ENCODE measurements at regions of chr9 and their contacts with region 1.

Region 1: DNA sequence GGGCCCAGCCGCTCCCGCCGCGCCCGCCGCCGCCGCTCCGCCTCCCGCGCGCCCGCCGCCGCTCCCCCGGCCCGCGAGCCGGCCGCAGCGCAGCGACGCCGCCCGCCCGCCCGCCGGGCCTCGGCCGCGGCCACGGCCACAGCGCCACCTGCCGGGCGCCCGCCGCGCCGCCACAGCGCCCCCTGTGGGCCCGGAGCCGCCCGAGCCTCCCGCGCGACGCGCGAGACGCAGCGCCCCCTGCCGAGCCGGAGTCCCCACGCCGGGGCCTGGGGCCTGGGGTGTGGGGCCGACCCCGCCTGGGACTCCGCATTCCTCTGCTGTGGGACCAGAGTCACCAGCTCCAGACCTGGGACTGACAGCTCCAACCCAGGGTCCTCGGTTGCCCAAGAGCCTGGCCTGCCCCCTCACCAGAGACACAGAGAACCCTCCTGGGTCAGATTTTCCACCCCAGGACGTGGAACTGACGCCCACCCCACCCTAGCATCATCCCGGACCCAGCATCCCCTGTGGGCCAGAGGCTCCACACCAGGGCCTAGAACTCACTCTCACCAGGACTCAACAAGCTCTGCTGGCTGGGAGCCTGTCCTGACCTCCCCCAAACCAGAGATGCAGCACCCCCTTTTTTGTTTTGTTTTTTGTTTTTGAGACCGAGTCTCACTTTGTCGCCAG is at the start of gene RAPGEF1:
- DNase-seq: peak in 1 of 2 experiments; percentile 40
- ATAC-seq: peak; percentile 62 to 67
- H3K4me3 ChIP-seq: peak within 1 kb of the TSS; percentile 67
- H3K27ac ChIP-seq: peak within 1 kb of the TSS; percentile 80 to 99
- H3K4me1 ChIP-seq: peaks cover 31% of the 10 kb centered on the region
- CTCF ChIP-seq: peak; percentile 100
- EP300 ChIP-seq: no peak
- POLR2A ChIP-seq: no peak
- RAD21 ChIP-seq: peak; percentile 67 to 87
- polyA plus RNA-seq, gene RAPGEF1: 27.7 and 32.5 TPM in 2 replicates

Region 2: DNA sequence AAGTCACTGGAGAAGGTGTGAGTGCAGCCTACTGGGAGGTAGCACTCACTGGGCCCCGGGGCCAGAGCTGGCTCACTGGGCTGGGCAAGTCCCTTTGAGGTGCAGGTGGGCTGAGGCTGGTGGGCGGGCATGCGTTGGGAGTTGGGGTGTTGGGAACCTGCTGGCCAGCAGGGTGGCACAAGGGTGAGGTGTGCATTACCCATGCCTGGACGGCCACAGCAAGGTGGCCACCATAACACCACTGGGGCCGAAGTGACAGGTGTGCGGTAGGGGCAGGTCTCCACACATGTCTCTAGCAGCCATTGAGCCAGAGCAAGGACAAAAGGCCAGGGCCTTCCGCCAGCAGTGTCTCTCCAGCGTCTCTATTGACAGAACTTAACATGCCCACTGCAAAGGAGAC is 172.2 kb before region 1 on chr9:
- CTCF ChIA-PET with region 1: interaction called, 12 read pairs
- POLR2A ChIA-PET with region 1: no interaction called
- DNase-seq: no peak
- ATAC-seq: peak in 1 of 2 experiments; percentile 38; a peak in 2 of 6 replicates
- H3K4me3 ChIP-seq: no peak overlapping the region
- H3K27ac ChIP-seq: no peak overlapping the region
- H3K4me1 ChIP-seq: no peaks in the 10 kb centered on the region
- CTCF ChIP-seq: no peak
- EP300 ChIP-seq: no peak
- POLR2A ChIP-seq: no peak
- RAD21 ChIP-seq: no peak

Region 3: DNA sequence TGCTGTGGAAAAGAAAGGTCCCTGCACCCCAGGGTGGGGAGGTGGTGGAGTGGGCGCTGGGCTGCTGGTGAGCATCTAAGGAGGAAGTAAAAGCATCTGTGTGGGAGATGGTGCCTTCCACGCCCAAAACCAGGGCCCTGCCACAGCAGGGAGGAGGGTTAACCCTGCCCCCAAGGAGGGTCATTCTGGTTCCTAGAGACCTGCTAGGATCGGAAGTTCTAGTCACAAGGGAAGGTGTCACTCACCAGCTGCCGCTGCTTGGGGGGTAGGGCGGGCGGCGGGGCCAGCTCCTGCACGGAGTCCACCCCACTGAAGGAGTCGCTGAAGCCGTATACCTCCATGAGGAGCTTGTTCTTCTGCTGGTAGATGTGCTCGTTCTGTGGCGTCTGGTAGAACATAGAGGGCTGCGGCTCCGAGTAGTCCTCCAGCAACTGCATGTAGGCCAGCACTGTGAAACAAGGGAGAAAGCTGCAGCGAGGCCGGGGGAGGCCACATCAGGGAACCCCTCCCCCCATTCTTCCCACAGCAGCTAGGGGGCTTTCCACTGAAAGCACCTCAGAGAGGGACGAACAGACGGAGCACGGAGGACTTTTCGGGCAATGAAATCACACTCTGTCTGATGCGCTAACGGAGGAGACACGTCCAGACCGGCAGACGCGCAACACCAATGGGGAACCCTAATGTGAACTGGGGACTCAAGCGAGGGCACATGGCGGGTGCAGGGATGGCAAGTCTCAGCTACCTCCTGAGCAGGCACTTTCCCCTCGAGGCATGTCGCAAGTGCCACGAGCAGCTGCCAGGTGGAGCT is 118.4 kb before region 1 on chr9:
- CTCF ChIA-PET with region 1: interaction called, 22 read pairs
- POLR2A ChIA-PET with region 1: no interaction called
- DNase-seq: no peak
- ATAC-seq: no peak
- H3K4me3 ChIP-seq: no peak overlapping the region
- H3K27ac ChIP-seq: no peak overlapping the region
- H3K4me1 ChIP-seq: no peaks in the 10 kb centered on the region
- CTCF ChIP-seq: no peak
- EP300 ChIP-seq: no peak
- POLR2A ChIP-seq: no peak
- RAD21 ChIP-seq: no peak

Region 4: DNA sequence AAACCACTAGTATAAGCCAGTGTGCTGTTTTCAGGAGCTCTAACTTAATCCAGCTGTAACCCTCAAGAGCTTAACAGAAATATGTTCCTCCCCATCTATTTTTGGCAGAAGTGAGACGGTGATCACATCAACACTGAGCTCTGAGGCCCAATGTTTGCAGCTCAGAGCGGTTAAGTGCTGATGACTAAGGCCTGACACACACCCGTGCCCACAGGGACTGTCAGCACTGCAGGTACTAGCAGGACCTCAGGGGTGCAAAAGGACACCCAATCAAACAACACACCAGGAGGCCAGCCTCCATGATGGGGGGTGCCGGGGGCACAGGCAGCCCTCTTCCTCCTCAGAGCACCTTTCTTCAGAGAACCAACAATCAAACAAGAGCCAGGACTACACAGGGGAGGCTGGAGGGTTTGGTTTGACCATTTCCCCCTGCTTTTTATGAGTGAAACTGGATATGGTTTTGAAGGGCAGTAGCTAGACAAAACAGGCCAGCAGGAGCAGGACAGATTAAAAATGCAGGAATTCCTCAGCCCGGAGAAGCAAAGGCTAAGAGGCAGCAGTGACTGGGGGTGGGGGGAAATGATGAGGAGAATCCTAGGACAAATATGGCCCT is 61.5 kb before region 1 on chr9:
- CTCF ChIA-PET with region 1: interaction called, 39 read pairs
- POLR2A ChIA-PET with region 1: no interaction called
- DNase-seq: peak; percentile 67 to 92
- ATAC-seq: peak; percentile 94 to 96
- H3K4me3 ChIP-seq: no peak overlapping the region
- H3K27ac ChIP-seq: peak overlapping the region; percentile 57 to 67; a peak in 5 of 6 replicates
- H3K4me1 ChIP-seq: peaks cover 38% of the 10 kb centered on the region
- CTCF ChIP-seq: no peak
- EP300 ChIP-seq: no peak
- POLR2A ChIP-seq: no peak
- RAD21 ChIP-seq: no peak

Region 5: DNA sequence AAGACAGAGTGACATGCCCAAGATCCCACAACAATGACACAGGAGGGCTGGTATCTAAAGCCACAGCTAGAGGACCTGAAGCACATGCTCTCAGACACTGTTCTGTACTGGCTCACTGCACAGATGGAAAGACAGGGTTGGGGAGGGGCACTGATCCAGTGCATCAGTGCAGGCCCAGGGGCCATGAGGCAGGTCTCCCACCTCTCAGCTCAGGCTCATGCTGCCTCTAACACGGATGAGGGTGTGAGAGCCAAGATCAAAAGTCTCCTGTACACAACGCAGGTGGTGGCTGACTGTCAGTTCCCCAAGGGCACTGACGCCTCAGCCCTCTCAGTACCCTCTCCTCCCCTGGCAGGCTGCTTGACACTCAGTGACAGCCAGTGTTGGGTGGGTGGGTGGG is 11.2 kb before region 1 on chr9:
- CTCF ChIA-PET with region 1: interaction called, 61 read pairs
- POLR2A ChIA-PET with region 1: no interaction called
- DNase-seq: no peak
- ATAC-seq: no peak
- H3K4me3 ChIP-seq: no peak overlapping the region
- H3K27ac ChIP-seq: no peak overlapping the region; a peak in 1 of 6 replicates
- H3K4me1 ChIP-seq: peaks cover 57% of the 10 kb centered on the region
- CTCF ChIP-seq: no peak
- EP300 ChIP-seq: no peak
- POLR2A ChIP-seq: no peak
- RAD21 ChIP-seq: no peak

Region 6: DNA sequence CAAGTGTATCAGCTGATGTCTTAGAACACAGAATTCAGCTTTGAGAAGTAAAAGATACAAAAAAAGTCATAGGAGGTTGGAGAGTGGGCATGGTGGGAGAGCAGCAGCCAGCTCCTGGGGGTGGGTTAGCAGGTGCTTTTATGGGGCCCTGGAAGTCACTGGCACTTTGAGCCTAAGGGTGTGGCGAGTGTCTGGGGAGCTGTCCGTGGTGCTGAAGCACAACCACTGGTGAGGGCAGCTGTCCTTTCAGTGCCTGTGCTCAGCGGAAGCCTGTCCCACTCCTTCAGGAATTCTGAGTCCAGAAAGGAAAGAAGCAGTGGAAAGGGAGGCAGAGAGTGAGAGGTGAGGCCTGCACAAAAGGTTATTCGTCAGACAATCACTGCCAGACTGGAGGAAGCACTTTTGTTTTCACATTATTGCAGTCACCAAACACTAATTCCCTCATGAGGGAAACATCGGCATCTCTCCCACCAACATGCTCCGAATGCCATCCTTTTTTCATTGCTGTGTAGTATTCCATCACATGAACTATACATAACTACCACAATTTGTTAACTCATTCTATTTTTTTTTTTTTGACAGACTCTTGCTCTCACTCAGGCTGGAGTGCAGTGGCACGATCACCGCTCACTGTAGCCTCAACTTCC is 59.2 kb after region 1 on chr9:
- CTCF ChIA-PET with region 1: no interaction called
- POLR2A ChIA-PET with region 1: no interaction called
- DNase-seq: peak in 1 of 2 experiments; percentile 43
- ATAC-seq: peak; percentile 52 to 76; a peak in 5 of 6 replicates
- H3K4me3 ChIP-seq: no peak overlapping the region
- H3K27ac ChIP-seq: no peak overlapping the region
- H3K4me1 ChIP-seq: no peaks in the 10 kb centered on the region
- CTCF ChIP-seq: no peak
- EP300 ChIP-seq: no peak
- POLR2A ChIP-seq: no peak
- RAD21 ChIP-seq: no peak

Measured in A549 (cell line).